Right lobe of liver (tissue), 6 donors: ENCODE measurements at regions of chr1 and their contacts with region 1.

Region 1: GRCh38 chr1:40951943-40952743 is 27.4 kb upstream of the CTPS1 start:
- DNase-seq: peak; percentile 77 to 85 (median 84)
- ATAC-seq: peak; percentile 93 to 97 (median 95)
- H3K4me3 ChIP-seq: no peak overlapping the region
- H3K27ac ChIP-seq: no peak overlapping the region
- H3K4me1 ChIP-seq: peaks cover 0 to 8% (median 0%) of the 10 kb centered on the region in 4 donors
- H3K27me3 ChIP-seq: no peaks in the 10 kb centered on the region
- CTCF ChIP-seq: peak; percentile 86 to 93 (median 92)
- POLR2A ChIP-seq: no peak

Region 2: GRCh38 chr1:40806731-40807695 is 145.1 kb before region 1 on chr1:
- intact Hi-C with region 1: no loop called
- DNase-seq: no peak
- ATAC-seq: no peak
- H3K4me3 ChIP-seq: no peak overlapping the region
- H3K27ac ChIP-seq: peak overlapping the region in 1 of 3 donors; percentile 8
- H3K4me1 ChIP-seq: peaks cover 0 to 3% (median 0%) of the 10 kb centered on the region in 4 donors
- H3K27me3 ChIP-seq: no peaks in the 10 kb centered on the region
- CTCF ChIP-seq: no peak
- POLR2A ChIP-seq: no peak

Region 3: GRCh38 chr1:40862008-40862863 is 89.9 kb before region 1 on chr1 and contains the start of gene CITED4:
- intact Hi-C with region 1: loop called (anchors 5 kb)
- DNase-seq: peak; percentile 97 to 99 (median 98)
- ATAC-seq: peak; percentile 91 to 97 (median 94)
- H3K4me3 ChIP-seq: peak within 1 kb of the TSS; percentile 53 to 66 (median 64)
- H3K27ac ChIP-seq: peak within 1 kb of the TSS; percentile 58 to 92 (median 90)
- H3K4me1 ChIP-seq: peaks cover 0 to 3% (median 0%) of the 10 kb centered on the region in 4 donors
- H3K27me3 ChIP-seq: no peaks in the 10 kb centered on the region
- CTCF ChIP-seq: peak; percentile 38 to 52 (median 42)
- POLR2A ChIP-seq: peak; percentile 99
- total RNA-seq, gene CITED4: 19.0 to 116 (median 25.8) TPM